ENCODE measurements at regions of chr13 and their contacts with region 1.

Region 1: DNA sequence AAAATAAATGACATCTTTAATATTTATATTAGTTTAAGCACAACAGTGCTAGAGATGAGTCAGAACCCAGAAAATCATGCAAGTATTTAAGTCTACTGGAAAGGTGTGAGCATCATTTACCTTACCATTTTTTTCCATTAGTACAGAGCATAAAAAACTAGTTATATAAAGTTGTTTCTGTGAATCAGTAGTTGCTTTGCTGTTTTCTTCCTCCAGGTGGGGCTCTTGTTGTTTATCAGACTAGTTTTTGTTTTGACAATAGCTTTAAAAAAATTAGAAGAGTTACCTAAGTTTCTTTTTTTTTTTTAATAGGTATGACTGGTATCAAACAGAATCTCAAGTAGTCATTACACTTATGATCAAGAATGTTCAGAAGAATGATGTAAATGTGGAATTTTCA is 12.7 kb downstream of the SUGT1 start:
- DNase-seq: no peak
- H3K4me3 Mint-ChIP-seq: no peak overlapping the region
- H3K27ac Mint-ChIP-seq: no peak overlapping the region
- H3K4me1 Mint-ChIP-seq: peaks cover 1% of the 10 kb centered on the region
- H3K27me3 Mint-ChIP-seq: no peaks in the 10 kb centered on the region

Region 2: DNA sequence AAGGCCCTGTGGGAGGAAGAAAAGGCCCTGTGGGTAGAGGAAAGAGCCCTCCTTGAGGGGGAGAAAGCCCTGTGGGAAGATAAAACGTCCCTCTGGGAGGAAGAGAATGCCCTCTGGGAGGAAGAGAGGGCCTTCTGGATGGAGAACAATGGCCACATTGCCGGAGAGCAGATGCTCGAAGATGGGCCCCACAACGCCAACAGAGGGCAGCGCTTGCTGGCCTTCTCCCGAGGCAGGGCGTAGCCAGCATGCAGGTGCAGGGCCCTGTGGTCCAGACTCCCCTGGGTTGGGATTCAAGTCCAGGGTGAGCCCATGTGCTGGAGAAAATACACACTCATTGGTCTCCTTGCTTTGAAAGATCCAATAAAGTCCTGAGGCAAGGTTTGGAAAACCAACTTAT is 799.5 kb before region 1 on chr13:
- intact Hi-C with region 1: no loop called
- DNase-seq: no peak
- H3K4me3 Mint-ChIP-seq: no peak overlapping the region
- H3K27ac Mint-ChIP-seq: no peak overlapping the region
- H3K4me1 Mint-ChIP-seq: peaks cover 7% of the 10 kb centered on the region
- H3K27me3 Mint-ChIP-seq: peaks cover 7% of the 10 kb centered on the region

Region 3: DNA sequence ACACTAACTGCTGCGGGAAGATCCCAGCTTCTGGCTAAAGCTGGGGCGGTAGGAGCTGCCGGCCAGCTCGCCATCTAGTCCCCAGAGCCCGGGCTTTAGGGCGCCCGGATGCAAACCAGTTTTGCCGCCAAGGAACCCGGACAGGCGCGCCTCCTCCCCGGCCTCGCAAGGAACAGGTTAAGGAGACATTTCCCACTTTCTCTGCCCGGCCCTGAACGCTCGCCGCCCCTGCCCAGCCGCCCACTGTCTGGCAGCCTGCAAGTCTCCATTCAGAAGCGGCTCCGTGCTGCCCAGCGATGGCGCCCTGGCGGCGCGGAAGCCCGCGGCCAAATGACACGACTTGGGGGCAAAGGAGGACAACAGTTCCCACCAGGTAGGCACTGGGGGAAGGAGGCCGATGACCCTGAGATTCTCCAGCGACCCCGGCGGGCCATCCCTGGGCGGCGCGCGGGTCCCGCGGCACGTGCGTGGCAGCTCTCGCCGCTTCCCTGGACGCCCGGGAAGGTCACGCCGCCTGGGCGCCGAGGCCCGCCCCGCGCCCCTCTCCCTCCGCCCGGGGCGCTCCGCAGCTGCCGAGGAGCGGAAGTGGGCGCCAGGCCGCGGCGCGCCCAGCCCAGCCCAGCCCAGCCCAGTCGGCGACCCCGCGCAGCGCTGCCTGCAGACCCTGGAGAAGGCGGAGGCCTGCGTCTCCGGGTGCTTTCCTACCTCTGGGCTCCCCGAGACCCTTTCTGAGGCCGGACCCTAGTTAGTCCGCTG is 65.3 kb before region 1 on chr13:
- intact Hi-C with region 1: no loop called
- DNase-seq: no peak
- H3K4me3 Mint-ChIP-seq: peak overlapping the region; percentile 79
- H3K27ac Mint-ChIP-seq: no peak overlapping the region
- H3K4me1 Mint-ChIP-seq: peaks cover 10% of the 10 kb centered on the region
- H3K27me3 Mint-ChIP-seq: peaks cover 16% of the 10 kb centered on the region

Region 4: DNA sequence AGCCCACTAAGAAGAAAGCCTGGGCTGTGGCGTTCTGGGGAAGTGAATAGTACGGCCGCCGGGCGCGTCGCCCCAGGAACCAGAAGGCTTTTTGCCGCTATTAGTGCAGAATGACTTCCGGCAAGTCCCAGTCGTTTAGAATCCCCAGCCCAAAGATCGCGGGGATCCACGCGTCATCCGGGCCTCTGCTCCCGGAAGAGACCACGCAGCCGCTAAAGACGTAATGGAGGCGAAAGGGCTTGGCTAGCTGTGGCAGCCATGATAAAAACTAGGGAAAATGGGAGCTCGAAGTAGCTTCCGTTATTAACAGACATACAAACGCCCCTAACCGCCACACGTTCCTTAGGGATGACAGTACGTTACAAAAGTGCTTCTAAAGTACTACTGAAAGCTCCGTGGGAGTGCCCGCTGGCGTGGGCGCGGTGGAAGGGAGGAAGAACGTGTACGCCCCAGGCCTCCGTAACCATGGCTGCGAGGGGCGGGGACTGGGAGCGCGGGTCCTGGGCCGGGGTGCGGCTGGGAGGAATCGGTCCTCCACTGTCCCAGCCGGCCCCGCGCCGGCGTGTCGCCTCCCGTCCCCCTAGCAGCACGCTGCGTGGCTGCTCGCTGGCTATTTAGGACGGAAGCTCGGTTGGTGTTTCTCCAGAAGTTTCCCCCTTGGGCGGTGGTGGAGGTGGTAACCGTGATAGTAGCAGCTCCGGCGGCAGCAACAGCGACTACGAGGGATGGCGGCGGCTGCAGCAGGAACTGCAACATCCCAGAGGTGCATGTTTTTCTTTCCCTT is 12.9 kb before region 1 on chr13 and contains the start of gene SUGT1:
- intact Hi-C with region 1: loop called (anchors 1 kb)
- DNase-seq: peak; percentile 93
- H3K4me3 Mint-ChIP-seq: no peak within 1 kb of the TSS
- H3K27ac Mint-ChIP-seq: no peak within 1 kb of the TSS
- H3K4me1 Mint-ChIP-seq: peaks cover 15% of the 10 kb centered on the region
- H3K27me3 Mint-ChIP-seq: no peaks in the 10 kb centered on the region
- total RNA-seq, gene SUGT1: 63.3 and 66.1 TPM in 2 replicates

Region 5: DNA sequence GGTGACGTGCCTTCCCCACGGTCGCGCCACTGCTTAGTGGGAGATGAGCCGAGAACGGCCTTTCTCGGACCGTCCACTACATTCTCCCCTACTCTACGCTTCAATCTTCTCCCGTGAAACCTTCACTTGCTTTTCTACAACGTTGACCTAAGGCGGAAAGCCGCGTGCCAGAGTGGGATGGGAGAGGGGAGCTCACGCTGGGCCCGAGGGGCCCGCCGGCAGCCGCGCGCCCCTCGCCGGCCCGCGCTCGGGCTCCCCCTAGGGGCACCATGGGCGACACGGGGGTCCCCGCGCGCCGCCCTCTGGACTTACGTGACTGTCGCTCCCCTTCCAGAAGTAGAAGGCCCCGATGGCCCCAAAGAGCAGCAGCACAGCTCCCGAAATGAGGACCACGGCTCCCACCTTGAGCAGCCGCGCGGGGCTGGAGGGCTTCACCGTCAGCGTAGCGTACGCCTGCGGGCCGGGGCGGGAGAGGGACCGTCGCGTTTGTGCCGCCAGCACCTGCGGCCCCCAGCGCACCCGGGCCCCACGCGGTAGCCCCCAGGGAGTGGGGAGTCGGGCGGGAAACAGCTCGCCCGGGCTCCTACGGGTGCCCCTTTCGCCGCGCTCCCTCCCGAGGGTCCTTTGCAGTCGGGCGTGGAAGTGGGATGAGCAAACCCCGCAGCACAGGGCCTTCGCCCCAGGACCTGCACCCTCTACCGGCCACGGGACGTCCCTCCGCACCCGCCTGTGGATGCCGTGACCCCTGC is 73.6 kb after region 1 on chr13:
- intact Hi-C with region 1: loop called (anchors 2 kb)
- DNase-seq: no peak
- H3K4me3 Mint-ChIP-seq: no peak overlapping the region
- H3K27ac Mint-ChIP-seq: no peak overlapping the region
- H3K4me1 Mint-ChIP-seq: no peaks in the 10 kb centered on the region
- H3K27me3 Mint-ChIP-seq: peaks cover 54% of the 10 kb centered on the region

Region 6: DNA sequence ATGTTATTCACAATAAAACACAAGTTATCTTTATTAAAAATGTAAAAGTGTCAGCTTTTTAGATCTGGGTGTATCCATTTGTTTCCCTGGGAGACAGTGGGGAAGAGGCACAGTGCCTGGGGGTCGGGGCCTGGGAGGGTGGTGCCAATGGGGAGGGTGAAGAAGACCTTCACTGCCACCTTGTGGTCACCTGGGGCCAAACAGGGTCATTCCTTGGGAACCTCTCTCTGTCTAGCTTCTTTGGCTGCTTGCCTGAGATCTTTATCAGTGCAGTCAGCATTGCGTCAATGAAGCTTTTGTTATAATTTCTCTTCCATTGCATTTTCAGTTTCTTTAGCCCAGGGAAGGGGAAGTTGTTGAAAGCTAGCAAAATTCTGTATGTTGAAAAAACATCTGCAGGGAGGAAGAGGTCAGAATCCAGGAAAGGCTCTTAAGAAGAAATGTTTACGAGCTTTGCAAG is 144.0 kb after region 1 on chr13:
- intact Hi-C with region 1: loop called (anchors 1 kb)
- DNase-seq: peak; percentile 15
- H3K4me3 Mint-ChIP-seq: no peak overlapping the region
- H3K27ac Mint-ChIP-seq: no peak overlapping the region
- H3K4me1 Mint-ChIP-seq: peaks cover 7% of the 10 kb centered on the region
- H3K27me3 Mint-ChIP-seq: peaks cover 7% of the 10 kb centered on the region

Region 7: DNA sequence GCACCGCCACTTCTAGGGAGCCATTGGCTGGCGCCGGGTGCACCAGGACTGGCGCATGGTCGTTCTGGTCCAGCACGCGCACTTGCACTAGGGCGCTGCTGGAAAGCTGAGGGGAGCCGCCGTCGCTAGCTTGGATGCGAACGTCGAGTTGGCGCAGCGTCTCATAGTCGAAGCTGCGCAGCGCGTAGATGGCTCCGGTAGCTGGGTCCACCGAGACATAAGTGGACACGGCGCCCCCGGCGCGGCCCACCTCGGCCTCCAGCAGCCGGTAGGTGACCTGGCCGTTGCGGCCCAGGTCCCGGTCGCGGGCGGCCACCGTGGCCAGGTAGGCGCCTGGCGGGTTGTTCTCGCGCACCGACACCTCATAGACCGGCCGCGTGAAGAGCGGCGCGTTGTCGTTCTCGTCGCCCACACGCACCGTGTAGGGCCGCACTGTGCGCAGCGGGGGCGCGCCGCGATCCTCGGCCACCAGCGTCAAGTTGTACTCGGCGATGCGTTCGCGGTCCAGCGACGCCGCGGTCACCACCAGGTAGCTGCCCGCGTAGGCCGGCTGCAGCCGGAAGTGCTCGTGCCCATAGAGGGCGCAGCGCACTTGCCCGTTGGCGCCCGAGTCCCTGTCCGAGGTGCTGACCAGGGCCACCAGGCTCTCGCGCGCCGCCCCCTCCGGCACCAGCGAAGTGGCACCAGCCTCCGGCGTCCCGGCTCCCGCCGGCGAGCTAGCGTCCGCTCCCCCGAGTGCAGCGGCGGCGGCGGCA is 181.4 kb after region 1 on chr13:
- intact Hi-C with region 1: loop called (anchors 10 kb)
- DNase-seq: peak; percentile 15
- H3K4me3 Mint-ChIP-seq: no peak overlapping the region
- H3K27ac Mint-ChIP-seq: no peak overlapping the region
- H3K4me1 Mint-ChIP-seq: no peaks in the 10 kb centered on the region
- H3K27me3 Mint-ChIP-seq: peaks cover 46% of the 10 kb centered on the region

Region 8: DNA sequence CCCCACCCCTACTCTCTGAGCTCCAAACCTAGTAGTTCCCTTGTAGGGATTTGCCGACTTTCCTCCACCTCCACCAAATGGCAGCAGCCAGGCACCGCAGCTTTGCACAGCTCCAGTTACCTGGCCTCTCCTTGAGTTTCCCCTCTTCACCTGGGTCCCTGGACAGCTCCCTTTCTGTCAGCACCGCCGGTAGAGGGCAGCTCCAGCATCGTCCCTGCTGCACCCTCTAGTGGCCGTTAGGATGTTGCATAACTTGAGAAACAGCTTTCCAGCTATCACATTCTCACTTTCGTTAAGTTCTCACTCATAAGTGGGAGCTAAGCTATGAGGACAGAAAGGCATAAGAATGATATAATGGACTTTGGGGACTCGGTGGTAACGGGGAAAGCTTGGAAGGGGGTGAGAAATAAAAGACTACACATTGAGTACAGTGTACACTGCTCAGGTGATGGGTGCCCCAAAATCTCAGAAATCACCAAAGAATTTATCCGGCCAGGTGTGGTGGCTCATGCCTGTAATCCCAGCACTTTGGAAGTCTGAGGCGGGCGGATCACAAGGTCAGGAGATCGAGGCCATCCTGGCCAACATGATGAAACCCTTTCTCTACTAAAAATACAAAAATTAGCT is 302.9 kb after region 1 on chr13:
- intact Hi-C with region 1: loop called (anchors 1 kb)
- DNase-seq: peak; percentile 29
- H3K4me3 Mint-ChIP-seq: no peak overlapping the region
- H3K27ac Mint-ChIP-seq: no peak overlapping the region
- H3K4me1 Mint-ChIP-seq: no peaks in the 10 kb centered on the region
- H3K27me3 Mint-ChIP-seq: peaks cover 4% of the 10 kb centered on the region

Region 9: DNA sequence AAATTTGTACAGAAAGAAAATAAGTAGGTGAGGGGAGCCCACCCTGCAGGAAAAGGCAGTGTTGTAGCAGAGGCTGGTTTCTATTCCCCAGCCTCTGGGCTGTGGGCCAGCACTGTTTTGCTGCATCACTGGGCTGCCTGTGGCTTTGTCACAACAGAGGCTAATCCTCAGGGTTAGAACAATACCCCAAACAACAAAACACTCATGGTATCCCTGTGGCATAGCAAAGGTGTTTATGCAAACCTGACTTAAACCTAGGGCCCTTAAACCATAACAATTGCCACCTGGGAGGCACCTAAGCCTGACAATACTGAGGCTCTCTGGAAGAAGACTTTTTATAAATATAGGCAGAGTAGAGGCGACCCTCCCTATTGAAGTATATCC is 678.0 kb after region 1 on chr13:
- intact Hi-C with region 1: no loop called
- DNase-seq: no peak
- H3K4me3 Mint-ChIP-seq: no peak overlapping the region
- H3K27ac Mint-ChIP-seq: no peak overlapping the region
- H3K4me1 Mint-ChIP-seq: no peaks in the 10 kb centered on the region
- H3K27me3 Mint-ChIP-seq: no peaks in the 10 kb centered on the region

Region 10: GRCh38 chr13:53856573-53857195 is 1191.4 kb after region 1 on chr13:
- intact Hi-C with region 1: no loop called
- DNase-seq: no peak
- H3K4me3 Mint-ChIP-seq: no peak overlapping the region
- H3K27ac Mint-ChIP-seq: no peak overlapping the region
- H3K4me1 Mint-ChIP-seq: no peaks in the 10 kb centered on the region
- H3K27me3 Mint-ChIP-seq: no peaks in the 10 kb centered on the region